ENCODE measurements at regions of chr20 and their contacts with region 1.

Region 1: DNA sequence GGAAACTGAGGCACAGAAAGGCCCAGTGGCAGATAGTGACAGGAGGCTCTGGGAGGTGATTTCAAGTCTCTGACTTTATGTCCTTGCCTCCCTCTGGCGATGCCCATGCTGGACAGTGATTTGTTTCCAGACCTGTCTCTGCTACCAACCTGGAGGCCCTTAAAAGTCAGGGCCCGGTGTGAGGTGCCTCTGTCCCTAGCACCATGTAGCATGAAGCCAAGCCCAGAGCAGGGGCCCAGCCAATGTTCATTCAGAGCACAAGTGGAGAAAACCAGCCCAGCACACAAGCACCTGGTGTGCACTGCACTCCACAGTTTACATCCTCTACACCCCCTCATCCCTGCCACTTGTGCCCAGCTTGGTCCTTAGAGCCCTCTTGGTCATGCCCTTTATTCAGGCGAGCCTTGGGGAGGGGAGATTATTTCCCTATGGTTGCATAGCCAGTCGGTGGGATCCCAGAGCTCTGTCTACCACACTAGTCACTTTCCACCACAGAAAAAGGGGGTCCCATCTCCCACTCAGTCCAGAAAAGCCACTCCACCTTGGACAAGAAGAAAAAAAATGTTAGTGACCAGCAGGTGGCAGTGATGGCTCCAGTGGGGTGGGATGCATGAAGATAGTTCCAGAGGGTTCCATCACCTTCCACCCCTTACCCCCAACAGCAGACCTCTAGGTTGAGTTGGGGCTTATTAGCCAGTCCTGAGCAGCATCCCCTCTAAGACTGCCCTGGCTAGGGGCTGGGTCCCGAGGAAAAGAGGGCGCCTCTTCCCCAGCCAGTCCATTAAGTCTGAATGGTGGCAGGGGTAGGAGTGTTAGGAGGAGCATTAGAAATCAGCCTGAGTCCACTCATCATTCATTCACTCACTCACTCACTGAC is 30.9 kb downstream of the KIAA1755 start:
- DNase-seq: no peak
- H3K4me3 ChIP-seq: no peak overlapping the region
- H3K27ac ChIP-seq: no peak overlapping the region
- H3K4me1 ChIP-seq: no peaks in the 10 kb centered on the region
- H3K27me3 ChIP-seq: no peaks in the 10 kb centered on the region
- CTCF ChIP-seq: peak; percentile 33

Region 2: DNA sequence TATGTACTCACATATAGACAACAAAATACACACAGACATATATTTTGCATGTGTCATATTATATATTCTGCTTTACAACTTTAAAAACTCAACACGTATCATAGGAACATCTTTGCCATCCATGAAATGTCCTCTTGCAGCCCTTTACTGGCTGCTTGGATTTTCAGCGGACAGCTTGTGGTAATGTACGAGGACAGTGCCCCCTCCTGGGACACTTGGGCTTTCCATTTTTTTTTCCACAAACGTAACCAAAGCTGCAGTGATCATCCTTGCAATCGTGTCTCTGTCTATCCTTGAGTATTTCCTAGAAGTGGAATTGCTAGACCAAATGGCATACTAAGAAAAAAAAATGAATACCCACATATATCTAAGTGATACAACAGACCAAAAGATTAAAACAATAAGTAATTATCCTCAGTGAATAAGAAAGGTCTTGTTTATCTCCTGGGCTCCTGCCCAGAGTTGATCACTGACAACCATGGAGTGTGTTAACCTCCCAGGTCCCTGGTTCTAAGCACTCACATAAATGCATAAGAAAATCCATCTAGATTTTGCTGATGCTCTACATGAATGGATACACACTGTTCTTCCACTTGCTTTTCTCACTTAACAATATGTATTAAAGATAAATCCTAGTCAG is 92.5 kb after region 1 on chr20:
- intact Hi-C with region 1: loop called (anchors 5 kb)
- DNase-seq: peak in 3 of 5 donors; percentile 44 to 80 (median 71)
- H3K4me3 ChIP-seq: no peak overlapping the region
- H3K27ac ChIP-seq: no peak overlapping the region
- H3K4me1 ChIP-seq: no peaks in the 10 kb centered on the region
- H3K27me3 ChIP-seq: no peaks in the 10 kb centered on the region
- CTCF ChIP-seq: peak; percentile 41